ENCODE measurements at regions of chr21 and their contacts with region 1.

Region 1: GRCh38 chr21:30518876-30519275 is 16.9 kb upstream of the KRTAP19-5 start:
- DNase-seq: no peak
- ATAC-seq: no peak
- H3K4me3 ChIP-seq: no peak overlapping the region
- H3K27ac ChIP-seq: no peak overlapping the region
- H3K4me1 ChIP-seq: no peaks in the 10 kb centered on the region
- H3K27me3 ChIP-seq: no peaks in the 10 kb centered on the region
- CTCF ChIP-seq: no peak
- POLR2A ChIP-seq: no peak

Region 2: GRCh38 chr21:30580132-30580531 is 61.3 kb after region 1 on chr21:
- intact Hi-C with region 1: loop called in 1 of 10 experiments (anchors 10 kb)
- DNase-seq: no peak
- ATAC-seq: no peak
- H3K4me3 ChIP-seq: no peak overlapping the region
- H3K27ac ChIP-seq: no peak overlapping the region
- H3K4me1 ChIP-seq: no peaks in the 10 kb centered on the region
- H3K27me3 ChIP-seq: no peaks in the 10 kb centered on the region
- CTCF ChIP-seq: no peak
- POLR2A ChIP-seq: no peak

Measured in heart left ventricle (tissue), 16 donors.